ENCODE measurements at regions of chr2 and their contacts with region 1.

Region 1: DNA sequence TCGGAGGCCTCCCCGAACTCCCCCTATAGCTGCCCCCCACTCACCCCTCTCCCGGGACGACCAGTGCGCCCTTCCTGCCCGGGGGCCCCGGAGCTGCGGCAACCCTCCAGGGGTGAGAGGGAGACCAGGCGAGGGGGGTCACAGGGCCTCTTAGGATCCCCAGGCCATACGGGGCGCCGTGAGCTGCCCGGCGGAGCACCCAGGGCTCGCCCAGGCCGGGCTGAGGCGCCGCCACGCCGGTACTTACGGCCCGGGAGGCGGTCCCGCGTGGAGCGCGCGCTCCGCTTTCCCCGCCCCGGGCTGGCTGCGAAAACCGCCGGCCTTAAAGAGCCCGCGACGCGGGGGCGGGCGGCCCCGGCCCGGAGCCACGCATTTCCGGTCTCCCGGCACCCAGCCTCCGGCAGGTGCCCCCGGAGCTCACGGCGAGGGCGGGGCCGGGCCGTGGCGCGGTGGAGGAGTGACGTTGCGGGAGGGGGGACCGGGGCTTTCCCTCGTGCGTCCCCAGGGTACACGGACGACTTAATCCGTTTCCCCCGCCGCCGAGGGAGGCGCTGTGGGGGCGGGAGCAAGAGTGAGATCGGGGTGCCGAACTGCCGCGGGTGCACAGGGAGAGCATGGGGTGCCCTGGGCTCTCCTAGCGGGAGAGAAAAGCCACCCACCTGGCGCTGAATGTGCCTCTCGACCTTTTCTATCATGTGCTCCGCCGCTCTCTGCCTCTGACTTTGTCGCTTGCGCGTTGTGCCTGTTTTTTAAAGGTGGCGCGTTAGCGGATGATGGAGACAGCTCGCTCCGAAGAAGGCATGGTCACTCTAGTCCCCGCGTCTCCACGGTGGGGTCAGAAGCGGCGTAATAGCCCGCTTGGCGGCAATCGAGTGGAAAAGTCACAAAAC is at the start of gene METTL21A:
- DNase-seq: peak; percentile 99
- ATAC-seq: peak; percentile 78
- H3K4me3 ChIP-seq: peak within 1 kb of the TSS; percentile 83 to 100 (median 95)
- H3K4me3 Mint-ChIP-seq: peak within 1 kb of the TSS; percentile 97
- H3K27ac ChIP-seq: peak within 1 kb of the TSS; percentile 98 to 99
- H3K27ac Mint-ChIP-seq: peak within 1 kb of the TSS; percentile 97
- H3K4me1 ChIP-seq: peaks cover 40 to 56% of the 10 kb centered on the region in 2 donors
- H3K4me1 Mint-ChIP-seq: peaks cover 45% of the 10 kb centered on the region
- H3K27me3 ChIP-seq: no peaks in the 10 kb centered on the region
- H3K27me3 Mint-ChIP-seq: no peaks in the 10 kb centered on the region
- CTCF ChIP-seq: peak; percentile 60
- total RNA-seq, gene METTL21A: 33.1 and 34.4 TPM in 2 replicates

Region 2: DNA sequence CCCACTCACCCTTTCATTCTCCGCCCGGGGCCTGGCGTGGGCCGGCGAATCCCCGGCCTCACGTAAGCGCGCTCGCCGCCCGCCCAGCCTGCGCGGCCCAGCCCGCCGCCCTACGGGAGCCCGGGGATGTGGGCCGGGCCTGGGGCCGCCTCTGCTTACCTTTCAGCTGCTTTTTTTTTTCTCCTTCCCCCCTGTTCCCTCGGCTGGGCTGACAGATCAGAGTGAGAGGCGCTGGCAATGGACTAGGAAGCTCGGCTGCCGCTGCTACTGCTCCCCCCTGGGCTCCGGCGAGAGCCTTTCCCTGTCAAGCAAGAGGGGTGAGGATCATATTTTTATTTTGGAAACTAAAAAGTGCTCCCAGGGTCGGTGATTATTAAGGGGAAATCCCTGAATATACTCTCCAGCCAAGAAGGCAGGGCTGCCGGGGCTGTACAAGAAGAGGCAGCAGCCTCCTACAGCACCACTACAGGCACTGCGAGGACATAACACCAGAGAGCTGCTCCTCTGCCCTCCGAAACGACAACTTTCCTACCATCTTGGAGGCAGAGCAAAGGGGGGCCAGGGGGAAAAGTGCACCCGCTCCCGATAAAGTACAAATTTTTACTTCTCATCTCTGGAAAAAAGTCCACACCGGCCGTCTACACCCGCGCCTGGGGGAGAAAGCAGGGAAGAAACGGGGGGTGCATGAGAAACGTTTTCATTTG is 1539.4 kb before region 1 on chr2 and contains the start of gene INO80D:
- CTCF ChIA-PET with region 1: no interaction called
- POLR2A ChIA-PET with region 1: no interaction called
- intact Hi-C with region 1: loop called (anchors 10 kb)
- DNase-seq: peak; percentile 91
- ATAC-seq: peak; percentile 84
- H3K4me3 ChIP-seq: peak within 1 kb of the TSS; percentile 68 to 95 (median 88)
- H3K4me3 Mint-ChIP-seq: peak within 1 kb of the TSS; percentile 99
- H3K27ac ChIP-seq: peak within 1 kb of the TSS; percentile 96 to 97
- H3K27ac Mint-ChIP-seq: peak within 1 kb of the TSS; percentile 100
- H3K4me1 ChIP-seq: peaks cover 19% of the 10 kb centered on the region in 2 donors
- H3K4me1 Mint-ChIP-seq: peaks cover 43% of the 10 kb centered on the region
- H3K27me3 ChIP-seq: no peaks in the 10 kb centered on the region
- H3K27me3 Mint-ChIP-seq: no peaks in the 10 kb centered on the region
- CTCF ChIP-seq: peak; percentile 67
- total RNA-seq, gene INO80D: 61.2 and 69.1 TPM in 2 replicates

Region 3: DNA sequence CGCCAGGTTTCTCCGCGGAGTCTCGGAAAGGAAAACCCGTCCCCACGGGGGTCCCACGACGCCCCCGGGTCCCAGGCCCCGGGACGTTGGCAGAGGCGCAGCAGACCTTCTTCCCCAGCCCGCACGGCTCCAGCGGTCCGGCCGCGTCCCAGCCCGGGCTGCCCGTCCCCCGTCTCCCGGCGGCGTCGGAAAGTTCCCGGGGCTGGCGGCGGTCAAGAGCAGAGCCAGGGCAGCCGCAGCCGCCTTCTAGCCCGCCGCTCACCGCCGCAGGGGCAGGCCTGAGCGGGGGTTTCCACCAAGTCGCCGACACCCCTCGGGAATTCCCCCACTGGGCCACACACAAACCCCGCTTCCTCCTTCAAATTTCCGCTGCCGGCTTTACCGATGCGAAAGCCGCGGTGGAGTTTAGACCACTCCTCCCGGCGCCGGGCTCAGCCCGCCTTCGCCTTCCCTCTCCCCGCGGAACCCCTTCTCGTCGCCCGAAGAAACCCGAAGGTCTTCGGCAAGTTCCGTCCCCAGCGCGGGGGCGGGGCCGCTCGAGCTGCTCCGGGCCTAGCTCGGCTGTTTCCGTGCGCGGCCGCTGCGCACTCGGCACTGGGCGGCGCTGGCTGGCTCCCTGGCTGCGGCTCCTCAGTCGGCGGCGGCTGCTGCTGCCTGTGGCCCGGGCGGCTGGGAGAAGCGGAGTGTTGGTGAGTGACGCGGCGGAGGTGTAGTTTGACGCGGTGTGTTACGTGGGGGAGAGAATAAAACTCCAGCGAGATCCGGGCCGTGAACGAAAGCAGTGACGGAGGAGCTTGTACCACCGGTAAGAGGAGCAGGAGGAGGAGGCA is 95.7 kb before region 1 on chr2 and contains the start of gene CREB1:
- CTCF ChIA-PET with region 1: interaction called, 19 read pairs
- POLR2A ChIA-PET with region 1: interaction called, 43 read pairs
- intact Hi-C with region 1: loop called (anchors 1 kb)
- DNase-seq: peak; percentile 100
- ATAC-seq: peak; percentile 77
- H3K4me3 ChIP-seq: peak within 1 kb of the TSS; percentile 89 to 98 (median 97)
- H3K4me3 Mint-ChIP-seq: peak within 1 kb of the TSS; percentile 93
- H3K27ac ChIP-seq: peak within 1 kb of the TSS; percentile 100
- H3K27ac Mint-ChIP-seq: peak within 1 kb of the TSS; percentile 98
- H3K4me1 ChIP-seq: peaks cover 70 to 73% of the 10 kb centered on the region in 2 donors
- H3K4me1 Mint-ChIP-seq: peaks cover 68% of the 10 kb centered on the region
- H3K27me3 ChIP-seq: no peaks in the 10 kb centered on the region
- H3K27me3 Mint-ChIP-seq: no peaks in the 10 kb centered on the region
- CTCF ChIP-seq: no peak
- total RNA-seq, gene CREB1: 149 and 156 TPM in 2 replicates

Region 4: GRCh38 chr2:207725873-207726578 is 100.8 kb after region 1 on chr2:
- CTCF ChIA-PET with region 1: interaction called, 19 read pairs
- POLR2A ChIA-PET with region 1: no interaction called
- intact Hi-C with region 1: loop called (anchors 5 kb)
- DNase-seq: peak; percentile 41
- ATAC-seq: no peak
- H3K4me3 ChIP-seq: no peak overlapping the region
- H3K4me3 Mint-ChIP-seq: no peak overlapping the region
- H3K27ac ChIP-seq: peak overlapping the region in 1 of 2 donors; percentile 67
- H3K27ac Mint-ChIP-seq: peak overlapping the region; percentile 56
- H3K4me1 ChIP-seq: peaks cover 20 to 27% of the 10 kb centered on the region in 2 donors
- H3K4me1 Mint-ChIP-seq: peaks cover 37% of the 10 kb centered on the region
- H3K27me3 ChIP-seq: no peaks in the 10 kb centered on the region
- H3K27me3 Mint-ChIP-seq: no peaks in the 10 kb centered on the region
- CTCF ChIP-seq: no peak

Region 5: DNA sequence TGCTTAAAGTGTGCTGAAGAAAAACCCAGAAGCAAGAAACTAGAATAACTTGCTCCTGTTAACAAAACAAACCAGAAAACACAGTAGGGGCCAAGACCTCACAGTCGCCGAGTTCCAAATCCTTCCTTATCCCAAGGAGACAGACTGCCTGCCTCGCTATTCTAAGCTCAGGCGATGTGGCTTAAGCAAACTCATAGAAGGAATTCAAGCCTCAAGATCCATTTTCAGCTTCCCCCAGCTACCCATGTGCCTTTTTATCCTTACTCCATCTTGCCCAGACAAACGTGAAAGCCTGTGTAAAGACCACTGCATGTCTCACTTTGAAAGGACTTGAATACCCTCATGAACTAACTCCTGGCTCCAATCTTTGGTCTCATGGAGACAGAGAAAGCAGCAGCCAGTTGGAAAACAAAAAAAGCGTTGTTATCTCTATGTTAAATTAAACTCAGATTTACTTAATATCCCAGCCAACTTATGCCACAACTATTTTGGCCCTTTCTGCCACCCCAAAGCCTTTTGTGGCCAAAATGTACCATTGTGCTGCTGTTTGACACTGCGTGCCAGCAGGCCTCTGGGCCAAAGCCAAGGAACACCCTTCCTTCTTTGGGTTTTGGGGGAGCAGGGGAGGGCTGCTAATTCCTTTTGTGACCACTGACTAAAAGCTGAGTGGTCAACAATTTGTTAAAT is 267.6 kb after region 1 on chr2:
- CTCF ChIA-PET with region 1: no interaction called
- POLR2A ChIA-PET with region 1: no interaction called
- intact Hi-C with region 1: no loop called
- DNase-seq: no peak
- ATAC-seq: no peak
- H3K4me3 ChIP-seq: no peak overlapping the region
- H3K4me3 Mint-ChIP-seq: no peak overlapping the region
- H3K27ac ChIP-seq: no peak overlapping the region
- H3K27ac Mint-ChIP-seq: no peak overlapping the region
- H3K4me1 ChIP-seq: no peaks in the 10 kb centered on the region
- H3K4me1 Mint-ChIP-seq: no peaks in the 10 kb centered on the region
- H3K27me3 ChIP-seq: no peaks in the 10 kb centered on the region
- H3K27me3 Mint-ChIP-seq: no peaks in the 10 kb centered on the region
- CTCF ChIP-seq: no peak

Region 6: GRCh38 chr2:207974216-207974605 is 348.9 kb after region 1 on chr2:
- CTCF ChIA-PET with region 1: interaction called, 4 read pairs
- POLR2A ChIA-PET with region 1: no interaction called
- intact Hi-C with region 1: loop called (anchors 1 kb)
- DNase-seq: no peak
- ATAC-seq: no peak
- H3K4me3 ChIP-seq: no peak overlapping the region
- H3K4me3 Mint-ChIP-seq: no peak overlapping the region
- H3K27ac ChIP-seq: no peak overlapping the region
- H3K27ac Mint-ChIP-seq: no peak overlapping the region
- H3K4me1 ChIP-seq: peaks cover 14 to 15% of the 10 kb centered on the region in 2 donors
- H3K4me1 Mint-ChIP-seq: peaks cover 15% of the 10 kb centered on the region
- H3K27me3 ChIP-seq: no peaks in the 10 kb centered on the region
- H3K27me3 Mint-ChIP-seq: no peaks in the 10 kb centered on the region
- CTCF ChIP-seq: no peak

Region 7: DNA sequence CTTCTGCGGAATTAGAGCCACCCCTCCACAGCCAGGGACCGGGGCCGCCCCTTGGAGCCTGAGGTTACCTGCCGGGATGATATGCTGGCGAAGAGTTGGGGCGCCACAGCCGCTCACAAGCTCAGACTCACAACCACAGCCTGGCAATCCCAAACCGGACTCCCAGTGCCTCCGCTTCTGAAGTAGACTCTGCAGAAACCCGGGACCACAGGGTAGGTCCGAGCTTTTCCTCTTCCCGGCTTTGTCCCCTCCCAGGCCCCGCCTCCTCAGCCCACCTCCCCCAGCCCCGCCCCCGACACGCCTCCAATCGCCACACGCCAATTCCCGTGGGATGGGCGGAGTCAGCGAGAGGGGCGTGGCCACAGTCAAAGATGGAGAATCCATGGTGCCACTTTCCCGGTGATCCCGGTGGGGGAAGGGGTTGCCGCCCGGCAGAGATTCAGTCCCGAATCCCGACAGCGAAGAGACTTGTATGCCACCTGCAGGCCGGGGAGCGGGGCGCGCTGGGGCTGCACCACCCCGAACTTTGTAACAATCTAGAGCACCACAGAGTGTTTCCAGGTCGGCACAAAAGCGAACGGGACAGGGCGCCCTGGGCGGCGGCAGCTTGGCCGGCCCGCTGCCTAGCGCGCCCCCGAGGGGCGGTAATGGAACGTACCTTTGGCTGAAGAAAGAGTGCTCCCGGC is 629.8 kb after region 1 on chr2 and contains the start of gene IDH1:
- CTCF ChIA-PET with region 1: no interaction called
- POLR2A ChIA-PET with region 1: interaction called, 3 read pairs
- intact Hi-C with region 1: loop called (anchors 1 kb)
- DNase-seq: peak; percentile 94
- ATAC-seq: peak; percentile 80
- H3K4me3 ChIP-seq: peak within 1 kb of the TSS; percentile 83 to 99 (median 93)
- H3K4me3 Mint-ChIP-seq: peak within 1 kb of the TSS; percentile 99
- H3K27ac ChIP-seq: peak within 1 kb of the TSS; percentile 47 to 65
- H3K27ac Mint-ChIP-seq: peak within 1 kb of the TSS; percentile 86
- H3K4me1 ChIP-seq: peaks cover 30 to 41% of the 10 kb centered on the region in 2 donors
- H3K4me1 Mint-ChIP-seq: peaks cover 52% of the 10 kb centered on the region
- H3K27me3 ChIP-seq: no peaks in the 10 kb centered on the region
- H3K27me3 Mint-ChIP-seq: no peaks in the 10 kb centered on the region
- CTCF ChIP-seq: peak; percentile 33
- total RNA-seq, gene IDH1: 41.4 TPM in 2 replicates

Measured in B cell (primary cell).